ENCODE measurements at regions of chr1 and their contacts with region 1.

Region 1: GRCh38 chr1:54287176-54287650 is 87.2 kb downstream of the MRPL37 start:
- DNase-seq: peak; percentile 95
- ATAC-seq: peak; percentile 82
- H3K4me3 Mint-ChIP-seq: peak overlapping the region; percentile 74
- H3K27ac Mint-ChIP-seq: peak overlapping the region; percentile 98
- H3K4me1 Mint-ChIP-seq: peaks cover 92% of the 10 kb centered on the region
- H3K27me3 Mint-ChIP-seq: no peaks in the 10 kb centered on the region
- CTCF ChIP-seq: no peak

Region 2: DNA sequence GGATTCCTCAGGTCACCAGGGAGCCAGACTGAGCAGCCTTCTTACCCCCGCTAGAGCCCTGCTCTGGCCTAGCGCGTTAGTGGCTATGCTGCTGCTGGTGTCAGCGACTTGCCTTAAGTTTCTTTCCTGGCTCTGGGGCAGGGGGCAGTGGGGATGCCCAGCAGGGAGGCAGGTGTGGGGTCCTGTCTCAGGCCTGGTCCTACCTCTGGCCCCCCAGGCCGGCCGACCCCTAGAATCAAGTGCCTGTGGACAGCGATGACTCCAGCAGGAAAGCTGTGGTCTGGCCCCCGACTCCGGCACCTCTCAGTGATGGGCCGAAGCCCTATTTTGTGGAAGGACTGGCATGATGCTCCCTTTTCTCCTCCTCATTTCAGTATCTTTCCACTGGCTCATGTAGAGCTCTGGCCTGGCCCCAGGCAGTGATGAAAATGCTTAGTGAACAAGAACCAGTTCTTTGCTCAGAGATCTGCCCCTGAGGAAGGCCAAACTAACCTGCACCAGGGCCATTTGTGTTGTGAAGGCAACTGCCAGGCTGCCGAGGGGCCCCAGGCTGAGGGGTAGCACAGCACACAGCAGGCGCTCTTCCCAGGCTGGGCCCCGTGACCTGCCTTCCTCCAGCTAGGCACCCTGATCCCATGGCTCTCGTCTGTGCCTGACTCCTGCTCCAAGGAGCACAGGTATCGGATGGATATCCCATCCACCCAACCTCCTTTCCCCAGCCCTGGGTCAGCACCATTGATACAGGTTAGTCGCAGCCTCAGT is 63.6 kb before region 1 on chr1:
- CTCF ChIA-PET with region 1: no interaction called
- POLR2A ChIA-PET with region 1: no interaction called
- intact Hi-C with region 1: no loop called
- DNase-seq: no peak
- ATAC-seq: no peak
- H3K4me3 Mint-ChIP-seq: no peak overlapping the region
- H3K27ac Mint-ChIP-seq: peak overlapping the region; percentile 7
- H3K4me1 Mint-ChIP-seq: peaks cover 9% of the 10 kb centered on the region
- H3K27me3 Mint-ChIP-seq: no peaks in the 10 kb centered on the region
- CTCF ChIP-seq: no peak

Region 3: DNA sequence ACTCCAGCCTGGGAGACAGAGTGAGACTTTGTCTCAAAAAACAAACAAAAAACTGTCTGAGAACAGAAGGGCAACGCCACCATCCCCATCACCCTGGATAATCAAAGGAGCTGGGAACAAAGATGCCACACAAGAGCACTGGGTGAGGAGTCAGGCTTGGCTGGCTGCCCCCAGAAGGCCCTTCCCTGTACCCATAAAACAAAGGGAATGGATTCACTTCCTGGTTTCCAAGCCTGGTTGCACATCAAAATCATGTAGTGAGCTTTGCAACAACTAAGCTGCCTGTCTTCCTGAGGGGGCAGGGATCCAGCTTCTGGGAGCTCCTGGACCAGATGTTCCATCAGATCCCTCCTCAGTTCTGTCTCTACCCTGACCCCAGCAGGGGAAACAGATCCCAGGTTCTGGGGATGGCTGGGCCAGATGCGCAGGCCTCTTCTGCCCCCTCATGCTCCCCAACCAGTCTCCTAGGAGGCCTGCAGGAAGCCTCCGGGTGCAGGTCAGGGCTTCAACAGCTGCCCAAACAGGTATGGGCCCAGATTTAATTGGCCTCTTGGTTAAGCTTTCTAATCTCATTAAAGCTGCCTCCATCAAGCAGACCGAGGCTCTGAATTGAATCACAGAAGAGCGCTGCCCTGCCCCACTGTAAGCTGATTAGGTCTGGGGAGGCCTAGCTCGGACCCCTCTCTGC is 10.5 kb after region 1 on chr1:
- CTCF ChIA-PET with region 1: interaction called, 5 read pairs
- POLR2A ChIA-PET with region 1: interaction called, 23 read pairs
- intact Hi-C with region 1: no loop called
- DNase-seq: no peak
- ATAC-seq: no peak
- H3K4me3 Mint-ChIP-seq: no peak overlapping the region
- H3K27ac Mint-ChIP-seq: peak overlapping the region; percentile 36
- H3K4me1 Mint-ChIP-seq: peaks cover 81% of the 10 kb centered on the region
- H3K27me3 Mint-ChIP-seq: no peaks in the 10 kb centered on the region
- CTCF ChIP-seq: no peak

Region 4: DNA sequence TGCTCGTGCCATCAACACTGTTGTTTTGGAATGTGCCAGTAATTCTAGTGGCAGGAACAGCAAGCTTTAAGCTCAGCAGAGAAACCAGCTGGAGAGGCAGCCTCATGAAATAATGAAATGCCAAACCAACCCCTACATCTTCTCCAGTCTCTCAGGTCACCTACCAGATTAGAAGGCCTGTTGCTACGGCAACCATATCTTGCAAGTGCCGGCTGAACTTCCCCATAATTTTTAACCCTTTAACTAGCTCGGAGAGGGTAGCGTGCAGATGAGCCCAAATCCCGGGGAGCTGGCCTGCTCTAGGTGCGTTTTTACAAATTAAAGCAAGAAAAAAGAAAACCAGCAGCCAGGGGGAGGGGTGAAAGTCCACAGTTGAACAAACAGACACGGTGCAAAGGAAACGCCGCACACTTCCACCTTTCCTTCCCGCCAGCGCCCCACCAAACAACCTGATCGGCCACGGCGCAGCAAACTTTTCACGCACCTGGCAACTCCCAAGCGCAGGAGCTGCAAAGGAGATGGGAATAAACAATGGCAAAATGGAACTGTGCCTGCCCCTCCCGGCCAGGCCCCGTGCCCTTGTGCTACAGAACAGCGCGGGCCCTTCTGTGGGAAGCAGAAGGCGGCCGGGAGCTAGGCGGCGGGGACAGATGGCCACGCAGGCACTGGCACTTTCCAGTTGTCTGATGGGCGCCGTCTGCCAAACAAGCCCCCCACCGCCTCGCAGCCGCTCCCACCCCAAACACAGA is 68.9 kb after region 1 on chr1:
- CTCF ChIA-PET with region 1: no interaction called
- POLR2A ChIA-PET with region 1: no interaction called
- intact Hi-C with region 1: loop called (anchors 5 kb)
- DNase-seq: peak; percentile 37
- ATAC-seq: no peak
- H3K4me3 Mint-ChIP-seq: peak overlapping the region; percentile 78
- H3K27ac Mint-ChIP-seq: peak overlapping the region; percentile 92
- H3K4me1 Mint-ChIP-seq: peaks cover 91% of the 10 kb centered on the region
- H3K27me3 Mint-ChIP-seq: no peaks in the 10 kb centered on the region
- CTCF ChIP-seq: no peak

Measured in activated CD8-positive, alpha-beta T cell treated with anti-CD3 and anti-CD28 coated beads for 36 hours (primary cell).